Activated CD8-positive, alpha-beta T cell treated with anti-CD3 and anti-CD28 coated beads for 36 hours (primary cell): ENCODE measurements at regions of chr17 and their contacts with region 1.

Region 1: DNA sequence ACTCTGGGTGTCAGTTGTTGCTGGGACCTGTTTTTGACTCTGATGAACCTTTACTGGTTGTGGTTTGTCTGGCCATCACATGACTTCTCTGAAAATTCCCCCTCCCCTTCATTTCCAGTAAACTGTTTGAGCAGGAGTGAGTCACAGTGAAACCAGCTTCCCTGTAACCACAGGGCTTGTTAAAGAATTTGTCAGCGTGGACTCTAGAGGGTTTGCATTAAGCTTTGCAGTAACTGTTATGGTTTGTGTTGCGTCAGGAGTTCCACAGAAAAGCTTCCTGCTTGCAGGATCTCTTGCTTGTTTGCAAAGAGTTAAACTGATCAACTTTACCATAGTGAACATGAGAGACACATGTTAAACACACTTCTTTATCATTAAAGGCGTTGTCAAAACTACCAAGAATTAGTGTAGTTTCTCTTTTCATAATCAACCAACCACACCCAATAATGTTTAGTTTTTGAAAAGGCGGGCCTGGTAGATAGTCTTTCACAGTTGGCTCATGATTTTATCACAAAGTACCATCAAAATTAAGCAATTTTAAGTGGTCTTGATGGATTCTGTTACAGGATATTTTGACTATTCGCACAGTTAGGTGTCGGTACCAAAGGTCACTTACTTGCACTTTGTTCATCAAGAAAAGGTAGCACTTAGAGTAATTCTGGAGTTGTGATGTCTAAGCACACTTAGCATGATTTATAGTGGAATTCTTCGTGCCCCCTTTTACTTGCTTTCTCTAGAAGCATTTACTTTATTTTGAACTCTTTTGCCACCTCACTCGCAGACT is 79.3 kb downstream of the VMP1 start:
- DNase-seq: peak; percentile 92
- ATAC-seq: peak; percentile 86
- H3K4me3 Mint-ChIP-seq: peak overlapping the region; percentile 72
- H3K27ac Mint-ChIP-seq: peak overlapping the region; percentile 99
- H3K4me1 Mint-ChIP-seq: peaks cover 58% of the 10 kb centered on the region
- H3K27me3 Mint-ChIP-seq: no peaks in the 10 kb centered on the region
- CTCF ChIP-seq: no peak

Region 2: DNA sequence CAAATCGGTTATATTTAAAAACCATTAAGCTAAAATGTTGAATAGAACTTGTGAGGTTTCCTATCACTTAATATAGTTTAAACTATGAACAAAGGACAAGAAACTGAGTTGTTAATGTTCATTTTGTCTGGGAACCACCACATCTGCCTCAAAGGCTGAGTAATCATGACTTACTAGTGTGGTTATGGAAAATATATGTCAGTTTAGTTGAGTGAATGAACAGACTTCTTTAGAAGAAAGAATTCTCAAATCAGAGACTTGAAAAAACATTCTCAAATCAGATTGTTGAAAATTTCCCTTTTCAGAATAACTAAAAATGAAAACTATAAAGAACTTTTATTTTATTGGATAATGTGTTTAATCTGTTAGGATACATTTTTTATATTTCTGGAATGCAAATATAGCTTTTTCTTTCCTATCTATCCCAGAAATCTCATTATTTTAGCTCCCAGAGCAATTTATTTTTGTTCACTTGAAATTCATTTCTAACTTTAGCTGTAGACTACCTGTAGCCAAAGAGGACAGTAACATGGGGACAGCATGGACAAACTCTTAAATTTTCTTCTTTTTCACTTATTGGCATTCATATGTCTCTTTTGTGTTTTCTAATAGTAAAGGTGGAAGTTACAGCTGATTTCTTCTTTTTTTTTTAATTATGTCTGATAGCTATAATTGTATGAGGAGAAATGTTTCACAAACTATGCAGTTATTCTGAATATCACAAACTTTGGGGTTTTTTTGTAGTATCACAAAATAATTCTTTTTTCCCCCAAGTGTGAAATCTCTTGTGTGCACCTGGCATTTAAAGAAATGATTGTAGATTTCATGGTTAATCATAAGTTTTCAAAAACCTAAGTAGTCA is 24.0 kb before region 1 on chr17:
- CTCF ChIA-PET with region 1: interaction called, 11 read pairs
- POLR2A ChIA-PET with region 1: interaction called, 94 read pairs
- intact Hi-C with region 1: no loop called
- DNase-seq: peak; percentile 47
- ATAC-seq: peak; percentile 71
- H3K4me3 Mint-ChIP-seq: peak overlapping the region; percentile 48
- H3K27ac Mint-ChIP-seq: peak overlapping the region; percentile 93
- H3K4me1 Mint-ChIP-seq: peaks cover 66% of the 10 kb centered on the region
- H3K27me3 Mint-ChIP-seq: no peaks in the 10 kb centered on the region
- CTCF ChIP-seq: no peak